SK-N-SH (cell line): ENCODE measurements at regions of chr3 and their contacts with region 1.

Region 1: DNA sequence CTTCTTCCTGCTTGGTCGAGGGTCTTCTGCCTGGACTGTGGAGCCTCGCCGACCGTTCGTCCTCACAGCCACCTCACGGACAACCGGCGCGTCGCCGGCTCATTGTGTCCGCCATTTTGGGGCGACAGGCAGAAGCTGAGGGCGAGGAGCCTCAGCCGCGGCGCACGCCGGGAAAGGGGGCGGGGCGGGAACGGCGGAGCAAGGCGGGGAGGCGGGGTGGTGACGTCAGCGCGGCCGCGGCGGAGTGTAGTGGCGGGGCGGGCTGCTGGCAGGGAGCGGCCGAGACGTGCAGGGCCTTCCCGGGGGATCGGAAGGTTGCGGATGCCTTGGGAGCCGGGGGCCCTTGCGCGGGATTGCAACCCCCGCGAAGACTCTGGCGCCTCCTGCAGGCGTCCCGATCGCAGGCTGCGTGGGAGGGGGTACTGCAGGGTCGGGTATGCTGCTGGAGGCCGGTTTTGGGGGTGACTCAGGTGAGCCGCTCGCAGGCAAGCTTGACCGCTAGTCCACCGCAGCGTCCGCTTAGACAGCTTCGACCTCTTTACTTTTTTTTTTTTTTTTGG is at the start of gene WDR82:
- DNase-seq: peak; percentile 98
- H3K4me3 ChIP-seq: peak within 1 kb of the TSS; percentile 71 to 92
- H3K27ac ChIP-seq: peak within 1 kb of the TSS; percentile 90 to 97
- H3K4me1 ChIP-seq: peaks cover 11 to 20% of the 10 kb centered on the region in 2 experiments; a peak in 3 of 4 replicates
- H3K27me3 ChIP-seq: no peaks in the 10 kb centered on the region
- CTCF ChIP-seq: peak; percentile 61
- EP300 ChIP-seq: no peak
- RAD21 ChIP-seq: peak; percentile 38
- polyA plus RNA-seq, gene WDR82: 41.2 and 57.8 TPM in 2 replicates

Region 2: DNA sequence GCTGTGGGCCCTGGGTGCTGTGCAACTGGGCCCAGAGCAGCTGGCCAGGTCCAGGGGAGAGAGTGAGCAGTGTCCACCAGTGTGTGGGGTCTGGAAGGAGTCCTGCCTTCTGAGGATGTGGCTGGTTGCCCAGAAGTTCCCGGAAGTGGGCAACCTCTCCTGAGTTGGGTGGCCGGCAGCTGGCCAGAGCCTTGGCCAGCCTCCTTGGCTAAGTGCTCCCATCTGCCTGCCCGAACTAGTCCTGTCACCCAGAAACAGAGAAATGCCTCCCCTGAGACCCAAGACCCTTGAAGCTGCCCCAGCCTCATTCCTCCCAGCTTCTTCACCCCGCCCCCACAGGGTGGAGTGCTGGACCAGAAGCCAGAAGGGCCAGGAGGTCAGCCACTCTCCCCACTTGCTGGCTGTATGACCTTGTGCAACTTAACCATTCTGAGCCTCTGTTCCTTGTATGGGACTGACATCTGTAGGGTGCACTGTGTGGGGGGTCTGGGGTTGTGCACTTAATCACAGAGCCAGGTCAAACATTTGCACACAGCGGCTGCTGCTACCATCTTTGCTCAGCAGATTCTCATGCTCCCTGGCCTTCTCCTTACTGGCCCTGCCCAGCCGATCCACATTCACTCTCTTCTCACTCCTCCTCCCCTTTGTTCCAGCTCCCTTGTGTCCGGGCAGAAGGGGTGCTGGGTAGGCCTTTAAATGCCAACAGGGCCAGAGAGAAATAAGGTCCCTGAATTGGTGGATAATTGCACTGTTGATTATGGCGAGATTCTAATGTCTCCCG is 88.1 kb before region 1 on chr3:
- CTCF ChIA-PET with region 1: no interaction called
- POLR2A ChIA-PET with region 1: no interaction called
- DNase-seq: no peak
- H3K4me3 ChIP-seq: no peak overlapping the region
- H3K27ac ChIP-seq: peak overlapping the region in 1 of 2 experiments; percentile 33; a peak in 2 of 4 replicates
- H3K4me1 ChIP-seq: peaks cover 10 to 16% of the 10 kb centered on the region in 2 experiments; a peak in 3 of 4 replicates
- H3K27me3 ChIP-seq: no peaks in the 10 kb centered on the region
- CTCF ChIP-seq: no peak
- EP300 ChIP-seq: peak in 1 of 2 experiments; percentile 39; a peak in 1 of 4 replicates
- RAD21 ChIP-seq: no peak

Region 3: GRCh38 chr3:52220380-52221026 is 58.1 kb before region 1 on chr3:
- CTCF ChIA-PET with region 1: interaction called, 37 read pairs
- POLR2A ChIA-PET with region 1: interaction called, 16 read pairs
- DNase-seq: peak; percentile 93
- H3K4me3 ChIP-seq: peak overlapping the region in 1 of 2 experiments; percentile 38; a peak in 1 of 4 replicates
- H3K27ac ChIP-seq: no peak overlapping the region
- H3K4me1 ChIP-seq: peaks cover 12 to 19% of the 10 kb centered on the region in 2 experiments; a peak in 3 of 4 replicates
- H3K27me3 ChIP-seq: no peaks in the 10 kb centered on the region
- CTCF ChIP-seq: peak; percentile 88
- EP300 ChIP-seq: no peak
- RAD21 ChIP-seq: peak; percentile 81

Region 4: DNA sequence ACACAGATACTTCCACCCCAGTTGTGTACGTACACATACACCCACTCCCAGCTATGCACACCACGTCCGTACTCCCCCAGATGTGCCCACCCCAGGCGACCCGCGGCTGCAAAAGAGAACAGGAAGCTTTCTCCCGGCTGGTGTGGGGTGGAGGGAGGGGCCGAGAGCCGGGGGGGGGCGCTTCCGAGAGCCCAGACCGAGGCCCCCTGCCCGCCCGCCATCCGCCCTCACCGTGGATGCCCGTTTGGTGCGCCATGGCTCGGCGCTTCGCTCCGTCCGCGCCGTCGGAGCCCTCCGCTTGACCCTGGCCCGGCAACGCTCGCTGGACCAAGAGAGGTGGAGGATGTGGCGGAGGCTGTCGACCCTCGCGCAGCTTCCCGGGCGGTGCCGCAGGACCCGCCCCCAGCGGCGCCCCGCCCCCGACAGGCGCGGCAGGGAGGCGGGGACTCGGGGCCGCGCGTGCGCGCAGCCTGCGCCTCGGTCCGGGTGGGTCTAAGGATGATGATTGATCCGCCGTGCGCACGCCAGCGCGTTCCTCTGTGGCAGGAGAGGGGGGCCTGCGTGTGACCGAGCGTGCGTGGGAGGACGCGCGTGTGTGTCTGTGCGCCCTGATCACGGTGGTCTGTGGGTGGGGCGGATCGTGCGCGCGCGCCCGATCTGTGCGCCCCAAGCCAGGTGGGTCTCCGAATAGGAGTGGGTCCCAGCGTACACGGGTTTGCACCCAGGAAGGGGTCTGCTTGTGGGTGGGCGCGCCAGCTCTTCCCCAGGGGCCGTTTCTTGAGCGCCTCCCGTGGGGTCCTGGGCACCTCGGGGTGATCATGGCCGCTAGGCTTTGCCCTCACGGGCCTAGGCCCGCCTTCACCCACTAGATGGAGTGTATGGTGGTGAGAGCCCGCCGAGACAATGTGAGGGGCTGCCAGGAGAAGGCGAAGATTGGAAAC is 39.6 kb before region 1 on chr3 and contains the start of gene TWF2:
- CTCF ChIA-PET with region 1: interaction called, 63 read pairs
- POLR2A ChIA-PET with region 1: interaction called, 67 read pairs
- DNase-seq: peak; percentile 99
- H3K4me3 ChIP-seq: peak within 1 kb of the TSS; percentile 90 to 97
- H3K27ac ChIP-seq: peak within 1 kb of the TSS; percentile 93 to 96
- H3K4me1 ChIP-seq: peaks cover 8 to 49% of the 10 kb centered on the region in 2 experiments
- H3K27me3 ChIP-seq: no peaks in the 10 kb centered on the region
- CTCF ChIP-seq: peak; percentile 53
- EP300 ChIP-seq: no peak
- RAD21 ChIP-seq: no peak
- polyA plus RNA-seq, gene TWF2: 157 and 188 TPM in 2 replicates

Region 5: DNA sequence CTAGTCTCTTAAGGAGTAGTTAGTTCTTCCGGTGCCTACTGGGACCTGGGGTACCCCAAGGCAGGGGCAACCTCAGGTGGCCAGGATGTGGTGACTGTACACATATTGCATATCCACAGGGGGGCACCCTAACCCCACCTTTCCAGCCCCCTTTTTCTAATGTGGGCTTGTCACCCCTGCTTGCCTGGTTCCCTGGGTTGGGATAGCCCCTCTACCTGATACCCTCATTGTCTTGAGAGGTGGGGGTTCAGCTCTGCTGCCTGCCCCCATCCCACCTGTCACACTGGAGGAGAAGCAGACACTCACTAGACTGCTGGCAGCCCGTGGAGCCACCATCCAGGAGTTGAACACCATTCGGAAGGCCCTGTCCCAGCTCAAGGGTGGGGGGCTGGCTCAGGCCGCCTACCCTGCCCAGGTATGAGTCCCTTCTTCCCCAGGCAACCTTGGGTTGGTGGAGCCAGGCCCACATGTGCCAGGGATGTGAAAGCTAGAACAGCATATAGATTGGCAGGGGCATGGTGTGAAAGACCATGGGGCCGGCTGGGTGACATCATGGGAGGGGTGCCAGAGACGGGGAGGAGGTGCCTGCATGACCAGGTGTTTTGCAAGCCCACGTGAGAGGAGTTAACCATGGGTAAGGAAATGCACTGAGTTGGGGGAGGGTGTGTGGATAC is 13.1 kb after region 1 on chr3:
- CTCF ChIA-PET with region 1: interaction called, 16 read pairs
- POLR2A ChIA-PET with region 1: interaction called, 27 read pairs
- DNase-seq: peak; percentile 80
- H3K4me3 ChIP-seq: no peak overlapping the region
- H3K27ac ChIP-seq: no peak overlapping the region
- H3K4me1 ChIP-seq: peaks cover 0 to 38% of the 10 kb centered on the region in 2 experiments; a peak in 2 of 4 replicates
- H3K27me3 ChIP-seq: no peaks in the 10 kb centered on the region
- CTCF ChIP-seq: peak; percentile 71
- EP300 ChIP-seq: no peak
- RAD21 ChIP-seq: peak; percentile 93

Region 6: GRCh38 chr3:52308308-52308707 is 29.7 kb after region 1 on chr3:
- CTCF ChIA-PET with region 1: interaction called, 3 read pairs
- POLR2A ChIA-PET with region 1: interaction called, 17 read pairs
- DNase-seq: no peak
- H3K4me3 ChIP-seq: no peak overlapping the region
- H3K27ac ChIP-seq: peak overlapping the region in 1 of 2 experiments; percentile 98; a peak in 2 of 4 replicates
- H3K4me1 ChIP-seq: peaks cover 9 to 79% of the 10 kb centered on the region in 2 experiments; a peak in 3 of 4 replicates
- H3K27me3 ChIP-seq: no peaks in the 10 kb centered on the region
- CTCF ChIP-seq: no peak
- EP300 ChIP-seq: no peak
- RAD21 ChIP-seq: no peak